ENCODE measurements at regions of chr11 and their contacts with region 1.

Region 1: GRCh38 chr11:27296497-27296896 is 66.5 kb downstream of the CCDC34 start:
- DNase-seq: no peak
- H3K4me3 ChIP-seq: no peak overlapping the region
- H3K27ac ChIP-seq: no peak overlapping the region
- H3K4me1 ChIP-seq: no peaks in the 10 kb centered on the region
- H3K27me3 ChIP-seq: no peaks in the 10 kb centered on the region
- CTCF ChIP-seq: peak in 5 of 6 experiments; percentile 27 to 78 (median 60)
- POLR2A ChIP-seq: no peak

Region 2: GRCh38 chr11:27111896-27112295 is 184.6 kb before region 1 on chr11:
- intact Hi-C with region 1: no loop called
- DNase-seq: no peak
- H3K4me3 ChIP-seq: no peak overlapping the region
- H3K27ac ChIP-seq: no peak overlapping the region
- H3K4me1 ChIP-seq: no peaks in the 10 kb centered on the region
- H3K27me3 ChIP-seq: no peaks in the 10 kb centered on the region
- CTCF ChIP-seq: no peak
- POLR2A ChIP-seq: no peak

Region 3: GRCh38 chr11:27184458-27185312 is 111.8 kb before region 1 on chr11:
- intact Hi-C with region 1: loop called (anchors 5 kb)
- DNase-seq: no peak
- H3K4me3 ChIP-seq: no peak overlapping the region
- H3K27ac ChIP-seq: no peak overlapping the region
- H3K4me1 ChIP-seq: no peaks in the 10 kb centered on the region
- H3K27me3 ChIP-seq: no peaks in the 10 kb centered on the region
- CTCF ChIP-seq: no peak
- POLR2A ChIP-seq: no peak

Region 4: GRCh38 chr11:27485930-27486773 is 189.7 kb after region 1 on chr11:
- intact Hi-C with region 1: loop called (anchors 10 kb)
- DNase-seq: peak in 1 of 2 donors; percentile 17
- H3K4me3 ChIP-seq: no peak overlapping the region
- H3K27ac ChIP-seq: no peak overlapping the region
- H3K4me1 ChIP-seq: no peaks in the 10 kb centered on the region
- H3K27me3 ChIP-seq: no peaks in the 10 kb centered on the region
- CTCF ChIP-seq: peak; percentile 71 to 99 (median 90)
- POLR2A ChIP-seq: no peak

Measured in thyroid gland (tissue), 4 donors.